ENCODE measurements at regions of chr13 and their contacts with region 1.

Region 1: GRCh38 chr13:113296842-113297369 is at the start of gene LAMP1:
- DNase-seq: peak; percentile 97 to 100 (median 99)
- ATAC-seq: peak; percentile 92
- H3K4me3 ChIP-seq: peak within 1 kb of the TSS; percentile 96
- H3K4me3 Mint-ChIP-seq: peak within 1 kb of the TSS; percentile 88 to 99 (median 98)
- H3K27ac ChIP-seq: peak within 1 kb of the TSS; percentile 90
- H3K27ac Mint-ChIP-seq: peak within 1 kb of the TSS; percentile 98 to 100 (median 100)
- H3K4me1 ChIP-seq: peaks cover 14 to 19% of the 10 kb centered on the region in 2 donors
- H3K4me1 Mint-ChIP-seq: peaks cover 28 to 45% (median 39%) of the 10 kb centered on the region in 7 donors
- H3K27me3 ChIP-seq: no peaks in the 10 kb centered on the region
- H3K27me3 Mint-ChIP-seq: peaks cover 8 to 37% (median 13%) of the 10 kb centered on the region in 5 donors
- total RNA-seq, gene LAMP1: 77.3 to 113 (median 98.8) TPM

Region 2: DNA sequence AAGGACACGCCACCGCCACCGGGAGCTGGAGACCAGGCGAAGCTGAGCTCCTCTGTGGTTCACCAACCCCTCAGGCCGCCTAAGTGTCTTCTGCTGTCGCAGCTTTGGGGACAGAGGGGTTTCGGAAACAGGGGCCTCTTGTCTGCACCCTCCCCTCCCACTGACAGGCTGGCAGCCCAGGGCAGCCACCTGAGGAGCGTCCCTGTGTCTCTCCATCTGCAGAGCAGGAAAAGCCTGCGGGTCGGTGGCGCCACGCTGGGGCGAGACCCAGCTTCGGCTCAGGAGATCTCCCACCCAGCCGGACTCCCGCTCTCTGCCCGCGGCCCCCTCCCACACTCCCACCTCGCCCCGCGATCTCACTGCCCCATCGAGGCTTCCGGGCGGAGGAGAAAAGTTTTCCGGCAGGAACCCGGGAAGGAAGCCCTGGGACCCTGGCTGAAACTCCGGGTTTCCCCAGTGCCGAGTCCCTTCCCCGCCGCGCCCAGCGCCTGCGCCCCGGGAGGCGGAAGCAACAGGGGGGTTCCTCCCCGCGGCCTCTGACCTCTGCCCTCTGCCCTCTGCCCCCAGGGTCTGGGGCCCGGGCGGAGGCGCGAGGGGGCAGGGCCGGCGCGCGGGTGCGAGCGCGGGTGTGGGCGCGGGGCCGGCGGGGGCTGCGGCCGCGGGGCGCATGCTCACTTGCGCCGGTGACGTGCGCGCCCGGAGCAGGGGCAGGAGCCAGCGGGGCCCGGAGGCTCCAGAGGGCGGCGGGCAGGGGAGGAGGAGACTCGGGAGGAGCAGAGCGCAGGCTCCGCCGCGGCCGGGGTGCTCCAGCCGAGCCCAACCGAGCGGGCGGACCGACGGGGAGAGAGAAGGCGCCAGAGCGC is 607.4 kb before region 1 on chr13 and contains the start of gene ATP11A:
- CTCF ChIA-PET with region 1: no interaction called
- POLR2A ChIA-PET with region 1: no interaction called
- intact Hi-C with region 1: loop called in 1 of 2 experiments (anchors 10 kb)
- DNase-seq: peak; percentile 67 to 90 (median 74)
- ATAC-seq: peak; percentile 85
- H3K4me3 ChIP-seq: peak within 1 kb of the TSS; percentile 78
- H3K4me3 Mint-ChIP-seq: peak within 1 kb of the TSS; percentile 79 to 96 (median 94)
- H3K27ac ChIP-seq: peak within 1 kb of the TSS; percentile 88
- H3K27ac Mint-ChIP-seq: peak within 1 kb of the TSS; percentile 79 to 96 (median 90)
- H3K4me1 ChIP-seq: peaks cover 15 to 26% of the 10 kb centered on the region in 2 donors
- H3K4me1 Mint-ChIP-seq: peaks cover 39 to 54% (median 50%) of the 10 kb centered on the region in 7 donors
- H3K27me3 ChIP-seq: no peaks in the 10 kb centered on the region
- H3K27me3 Mint-ChIP-seq: no peaks in the 10 kb centered on the region
- total RNA-seq, gene ATP11A: 45.0 to 111 (median 79.8) TPM

Region 3: DNA sequence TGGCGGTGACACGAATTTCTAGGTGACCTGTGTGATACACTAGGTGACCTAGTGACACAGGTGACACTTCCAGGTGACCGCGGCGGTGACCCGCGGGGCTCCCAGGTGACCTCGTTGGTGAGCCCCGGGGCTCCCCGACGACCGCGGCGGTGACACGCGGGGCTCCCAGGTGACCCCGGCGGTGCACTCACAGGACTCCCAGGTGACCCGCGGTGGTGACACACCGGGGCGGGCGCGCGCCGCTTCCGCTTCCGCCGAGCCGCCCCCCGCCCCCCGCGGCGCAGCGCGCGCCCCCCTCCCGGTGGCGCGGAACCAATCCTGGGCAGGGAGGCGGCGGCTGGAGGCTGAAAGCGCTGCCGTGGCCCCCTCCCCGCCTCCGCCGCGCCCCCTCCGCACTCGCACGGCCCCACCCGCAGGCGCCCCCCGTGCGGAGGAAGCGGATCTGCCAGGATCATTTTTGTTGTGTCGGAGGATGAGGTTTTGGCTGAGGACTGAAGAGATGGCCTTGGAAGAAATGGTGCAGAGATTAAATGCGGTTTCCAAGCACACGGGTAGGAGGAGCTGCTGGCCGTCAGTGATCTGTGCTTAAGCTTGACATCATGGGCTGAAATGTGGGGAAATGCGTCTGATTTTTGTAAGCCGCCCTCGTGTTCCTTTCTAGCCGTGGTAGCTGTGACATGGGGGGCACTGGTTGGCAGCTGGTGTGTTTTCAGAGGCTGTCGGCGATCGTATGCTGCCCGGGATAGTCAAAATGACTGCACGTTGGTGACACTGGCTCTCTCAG is 327.8 kb before region 1 on chr13 and contains the start of gene MCF2L:
- CTCF ChIA-PET with region 1: no interaction called
- POLR2A ChIA-PET with region 1: interaction called, 3 read pairs
- intact Hi-C with region 1: loop called in 1 of 2 experiments (anchors 1 kb)
- DNase-seq: peak; percentile 33 to 80 (median 78)
- ATAC-seq: peak; percentile 83
- H3K4me3 ChIP-seq: peak within 1 kb of the TSS; percentile 73
- H3K4me3 Mint-ChIP-seq: peak within 1 kb of the TSS; percentile 89 to 100 (median 94)
- H3K27ac ChIP-seq: peak within 1 kb of the TSS; percentile 62
- H3K27ac Mint-ChIP-seq: peak within 1 kb of the TSS; percentile 67 to 97 (median 94)
- H3K4me1 ChIP-seq: peaks cover 10 to 14% of the 10 kb centered on the region in 2 donors
- H3K4me1 Mint-ChIP-seq: peaks cover 9 to 57% (median 42%) of the 10 kb centered on the region in 7 donors
- H3K27me3 ChIP-seq: no peaks in the 10 kb centered on the region
- H3K27me3 Mint-ChIP-seq: peaks cover 0 to 35% (median 0%) of the 10 kb centered on the region in 5 donors
- total RNA-seq, gene MCF2L: 0.51 to 32.6 (median 21.9) TPM

Region 4: DNA sequence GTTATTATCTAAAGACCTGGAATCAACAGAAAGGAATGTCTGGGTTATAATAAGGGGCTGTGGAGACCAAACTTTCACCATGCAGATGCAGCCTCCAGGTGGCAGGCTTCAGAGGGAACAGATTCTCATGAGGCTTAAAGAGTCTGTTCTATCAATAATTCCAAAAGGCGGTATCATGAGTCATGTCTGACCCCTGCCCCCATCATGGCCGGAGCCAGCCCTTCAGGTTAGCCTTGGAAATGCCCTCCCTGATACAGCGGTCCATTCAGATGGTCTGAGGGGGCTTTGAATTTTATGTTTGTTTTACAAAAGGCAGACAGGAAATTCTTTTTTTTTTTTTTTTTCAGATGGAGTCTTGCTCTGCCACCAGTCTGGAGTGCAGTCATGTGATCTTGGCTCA is 21.5 kb before region 1 on chr13:
- CTCF ChIA-PET with region 1: interaction called, 3 read pairs
- POLR2A ChIA-PET with region 1: interaction called, 4 read pairs
- intact Hi-C with region 1: loop called in 1 of 2 experiments (anchors 1 kb)
- DNase-seq: peak in 7 of 9 donors; percentile 22 to 55 (median 51)
- ATAC-seq: peak; percentile 56
- H3K4me3 ChIP-seq: no peak overlapping the region
- H3K4me3 Mint-ChIP-seq: peak overlapping the region in 6 of 10 donors; percentile 33 to 65 (median 56)
- H3K27ac ChIP-seq: no peak overlapping the region
- H3K27ac Mint-ChIP-seq: peak overlapping the region in 3 of 9 donors; percentile 19 to 55 (median 45)
- H3K4me1 ChIP-seq: no peaks in the 10 kb centered on the region
- H3K4me1 Mint-ChIP-seq: peaks cover 6 to 18% (median 11%) of the 10 kb centered on the region in 7 donors
- H3K27me3 ChIP-seq: no peaks in the 10 kb centered on the region
- H3K27me3 Mint-ChIP-seq: peaks cover 0 to 18% (median 8%) of the 10 kb centered on the region in 5 donors

Region 5: DNA sequence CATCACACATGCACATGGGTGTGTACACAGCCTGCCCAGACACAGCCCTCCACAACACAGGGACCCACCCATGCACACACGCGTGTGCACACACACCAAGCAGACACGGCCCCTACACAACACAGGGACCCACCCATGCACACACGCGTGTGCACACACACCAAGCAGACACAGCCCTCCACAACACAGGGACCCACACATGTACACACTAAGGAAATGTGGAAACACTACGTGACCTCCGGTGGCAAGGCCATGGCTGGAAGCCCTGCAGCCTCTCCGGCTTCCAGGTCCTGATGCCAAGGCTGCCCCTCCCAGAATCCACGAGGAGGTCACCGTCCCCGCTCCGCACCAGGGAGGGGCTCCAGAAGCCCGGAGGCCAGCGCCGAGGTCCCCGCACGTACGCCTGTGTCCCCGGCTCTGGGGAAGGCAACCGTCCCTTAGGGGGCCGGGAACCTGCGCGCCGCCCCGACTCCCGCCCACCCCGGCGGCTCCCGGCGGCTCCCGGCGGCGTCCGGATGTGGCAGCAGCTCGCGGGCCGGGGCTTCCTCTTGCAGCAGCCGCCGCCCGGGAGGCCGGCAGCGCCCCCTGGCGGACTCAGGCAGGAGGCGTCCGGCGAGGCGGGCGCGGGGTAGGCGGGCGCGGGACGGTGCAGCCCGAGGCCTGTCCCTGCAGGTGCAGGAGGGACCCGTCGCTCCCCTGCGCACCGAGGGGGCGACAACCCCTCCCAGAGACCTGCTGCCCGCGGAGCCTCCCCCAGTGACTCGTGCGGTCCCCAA is 96.8 kb after region 1 on chr13:
- CTCF ChIA-PET with region 1: interaction called, 4 read pairs
- POLR2A ChIA-PET with region 1: interaction called, 3 read pairs
- intact Hi-C with region 1: loop called (anchors 1 kb)
- DNase-seq: peak; percentile 75 to 91 (median 86)
- ATAC-seq: peak; percentile 99
- H3K4me3 ChIP-seq: peak overlapping the region; percentile 79
- H3K4me3 Mint-ChIP-seq: peak overlapping the region; percentile 84 to 97 (median 90)
- H3K27ac ChIP-seq: peak overlapping the region; percentile 74
- H3K27ac Mint-ChIP-seq: peak overlapping the region in 8 of 9 donors; percentile 29 to 89 (median 72)
- H3K4me1 ChIP-seq: peaks cover 0 to 7% of the 10 kb centered on the region in 2 donors
- H3K4me1 Mint-ChIP-seq: peaks cover 4 to 9% (median 5%) of the 10 kb centered on the region in 7 donors
- H3K27me3 ChIP-seq: no peaks in the 10 kb centered on the region
- H3K27me3 Mint-ChIP-seq: peaks cover 0 to 4% (median 0%) of the 10 kb centered on the region in 5 donors

Region 6: DNA sequence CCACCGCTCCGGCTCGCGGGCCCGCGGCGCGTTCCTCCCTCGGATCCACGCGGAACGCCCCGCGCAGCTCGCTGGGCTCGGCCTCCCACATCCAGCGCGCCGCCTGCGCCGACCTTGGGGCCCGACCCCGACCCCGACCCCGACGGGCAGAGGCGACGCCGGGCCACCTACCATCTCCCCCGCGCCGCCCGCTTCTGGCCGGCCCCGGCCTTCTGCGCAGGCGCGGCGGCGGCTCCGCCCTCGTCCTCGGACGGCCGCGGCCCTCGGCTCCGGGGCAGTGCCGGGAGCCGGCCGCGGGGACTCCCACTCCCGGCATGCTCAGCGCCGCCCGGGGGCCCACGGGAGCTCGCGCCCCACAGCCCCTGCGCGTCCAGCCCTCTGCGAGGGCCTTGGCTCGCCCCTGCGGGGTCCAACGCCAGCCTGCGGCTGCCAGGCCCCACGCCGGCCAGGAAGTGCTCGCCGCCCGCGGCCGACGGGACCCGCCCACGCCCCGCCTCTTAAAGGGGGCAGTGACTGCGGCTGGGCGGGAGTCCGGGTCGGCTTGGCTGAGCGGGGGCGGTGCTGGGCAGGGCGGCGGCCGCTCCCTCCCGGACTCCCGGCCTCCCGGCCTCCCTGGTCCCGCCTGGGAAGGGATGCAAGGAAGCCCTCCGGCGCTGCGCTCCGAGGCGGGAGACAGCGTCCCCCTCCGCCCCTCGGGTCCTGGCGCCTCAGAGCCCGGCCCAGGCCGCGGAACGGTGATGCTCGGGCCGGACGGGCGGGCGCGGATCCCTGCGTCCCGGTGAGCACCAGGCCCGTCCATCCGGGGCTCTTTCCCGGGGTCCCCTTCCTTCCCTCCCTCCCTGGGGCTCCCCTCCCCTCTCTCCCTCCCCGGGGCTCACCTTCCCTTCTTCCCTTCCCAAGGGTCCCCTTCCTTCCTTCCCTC is 193.9 kb after region 1 on chr13 and contains the start of gene DCUN1D2:
- CTCF ChIA-PET with region 1: no interaction called
- POLR2A ChIA-PET with region 1: no interaction called
- intact Hi-C with region 1: loop called (anchors 1 kb)
- DNase-seq: peak; percentile 43 to 90 (median 59)
- ATAC-seq: peak; percentile 91
- H3K4me3 ChIP-seq: peak within 1 kb of the TSS; percentile 53
- H3K4me3 Mint-ChIP-seq: peak within 1 kb of the TSS; percentile 84 to 97 (median 92)
- H3K27ac ChIP-seq: peak within 1 kb of the TSS; percentile 74
- H3K27ac Mint-ChIP-seq: peak within 1 kb of the TSS; percentile 29 to 92 (median 85)
- H3K4me1 ChIP-seq: peaks cover 9 to 24% of the 10 kb centered on the region in 2 donors
- H3K4me1 Mint-ChIP-seq: peaks cover 43 to 78% (median 72%) of the 10 kb centered on the region in 7 donors
- H3K27me3 ChIP-seq: no peaks in the 10 kb centered on the region
- H3K27me3 Mint-ChIP-seq: no peaks in the 10 kb centered on the region
- total RNA-seq, gene DCUN1D2: 21.4 to 31.9 (median 23.4) TPM

Region 7: DNA sequence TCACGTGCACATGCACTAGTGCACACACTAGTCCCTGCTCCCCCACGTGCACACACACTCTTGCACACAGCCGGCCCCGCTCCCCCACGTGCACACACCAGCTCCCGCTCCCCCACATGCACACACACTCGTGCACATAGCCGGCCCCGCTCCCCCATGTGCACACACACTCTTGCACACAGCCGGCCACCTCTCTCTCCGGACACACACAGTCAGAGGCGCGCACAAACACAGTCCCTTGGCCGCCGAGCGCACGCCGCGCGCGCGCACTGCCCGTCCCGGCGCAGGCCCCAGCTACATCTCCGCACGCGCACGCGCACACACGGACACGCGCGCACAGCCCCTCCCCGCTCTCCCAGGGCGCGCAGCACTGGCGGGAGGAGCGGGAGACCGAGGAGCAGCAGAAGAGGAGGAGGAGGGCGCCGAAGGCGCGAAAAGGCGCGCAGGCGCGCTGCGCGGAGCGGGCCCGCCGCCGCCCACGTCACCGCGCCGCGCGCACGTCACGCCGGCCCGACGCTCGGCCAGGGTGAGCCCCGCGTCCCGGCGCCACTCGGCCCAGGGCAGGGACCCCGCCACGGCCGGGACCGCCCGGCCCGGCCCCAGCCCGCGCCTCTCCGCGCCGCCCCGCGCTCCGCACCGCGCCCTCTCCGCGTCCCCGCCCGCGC is 287.4 kb after region 1 on chr13 and contains the start of gene TFDP1:
- CTCF ChIA-PET with region 1: no interaction called
- POLR2A ChIA-PET with region 1: no interaction called
- intact Hi-C with region 1: loop called in 1 of 2 experiments (anchors 10 kb)
- DNase-seq: peak; percentile 34 to 91 (median 64)
- ATAC-seq: peak; percentile 84
- H3K4me3 ChIP-seq: peak within 1 kb of the TSS; percentile 56
- H3K4me3 Mint-ChIP-seq: peak within 1 kb of the TSS; percentile 84 to 98 (median 92)
- H3K27ac ChIP-seq: peak within 1 kb of the TSS; percentile 16
- H3K27ac Mint-ChIP-seq: peak within 1 kb of the TSS; percentile 20 to 93 (median 83)
- H3K4me1 ChIP-seq: peaks cover 18 to 21% of the 10 kb centered on the region in 2 donors
- H3K4me1 Mint-ChIP-seq: peaks cover 20 to 39% (median 34%) of the 10 kb centered on the region in 7 donors
- H3K27me3 ChIP-seq: no peaks in the 10 kb centered on the region
- H3K27me3 Mint-ChIP-seq: peaks cover 0 to 3% (median 0%) of the 10 kb centered on the region in 5 donors
- total RNA-seq, gene TFDP1: 21.4 to 127 (median 34.7) TPM

Measured in naive thymus-derived CD4-positive, alpha-beta T cell (primary cell).